Activated B cell treated with CpG ODN at 0.5 μM for 24 hours (primary cell): ENCODE measurements at regions of chr14 and their contacts with region 1.

Region 1: DNA sequence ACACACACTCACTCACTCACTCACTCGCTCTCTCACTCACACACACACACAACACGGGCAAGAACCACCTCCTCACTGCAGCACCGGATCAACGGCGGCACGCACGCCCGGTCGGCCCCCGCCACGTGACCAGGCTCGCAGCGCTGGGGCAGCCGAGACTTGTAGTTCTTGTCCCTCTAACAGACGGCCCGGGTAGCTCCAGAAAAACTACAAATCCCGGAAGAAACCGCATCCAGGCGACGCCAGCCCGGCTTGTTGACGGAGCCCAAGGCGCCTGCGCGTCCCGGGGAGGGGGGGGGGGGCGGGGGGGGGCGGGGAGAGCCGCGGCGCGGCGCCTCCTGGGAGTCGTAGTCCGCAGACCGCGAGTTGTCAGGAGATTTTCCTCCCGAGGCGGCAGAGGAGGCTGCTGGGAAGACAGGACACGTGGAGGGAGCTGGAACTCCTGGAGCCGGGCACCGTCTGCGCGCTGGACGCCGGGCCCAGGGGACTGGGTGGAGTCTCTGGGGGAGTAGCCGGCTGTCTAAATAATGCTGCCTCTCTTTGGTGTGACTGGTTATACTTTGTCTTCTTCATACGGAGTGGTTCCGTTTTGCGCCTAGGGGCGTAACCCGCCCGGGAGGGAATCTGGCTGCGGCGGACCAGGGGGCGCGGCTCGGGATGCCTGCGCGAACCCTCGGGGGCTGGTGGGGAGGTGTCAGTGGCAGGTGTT is at the start of gene MAX:
- DNase-seq: peak; percentile 92
- ATAC-seq: peak; percentile 86
- H3K4me3 Mint-ChIP-seq: peak within 1 kb of the TSS; percentile 89
- H3K27ac Mint-ChIP-seq: peak within 1 kb of the TSS; percentile 95
- H3K4me1 Mint-ChIP-seq: peaks cover 42% of the 10 kb centered on the region
- H3K27me3 Mint-ChIP-seq: no peaks in the 10 kb centered on the region
- CTCF ChIP-seq: no peak
- total RNA-seq, gene MAX: 115 and 116 TPM in 2 replicates

Region 2: DNA sequence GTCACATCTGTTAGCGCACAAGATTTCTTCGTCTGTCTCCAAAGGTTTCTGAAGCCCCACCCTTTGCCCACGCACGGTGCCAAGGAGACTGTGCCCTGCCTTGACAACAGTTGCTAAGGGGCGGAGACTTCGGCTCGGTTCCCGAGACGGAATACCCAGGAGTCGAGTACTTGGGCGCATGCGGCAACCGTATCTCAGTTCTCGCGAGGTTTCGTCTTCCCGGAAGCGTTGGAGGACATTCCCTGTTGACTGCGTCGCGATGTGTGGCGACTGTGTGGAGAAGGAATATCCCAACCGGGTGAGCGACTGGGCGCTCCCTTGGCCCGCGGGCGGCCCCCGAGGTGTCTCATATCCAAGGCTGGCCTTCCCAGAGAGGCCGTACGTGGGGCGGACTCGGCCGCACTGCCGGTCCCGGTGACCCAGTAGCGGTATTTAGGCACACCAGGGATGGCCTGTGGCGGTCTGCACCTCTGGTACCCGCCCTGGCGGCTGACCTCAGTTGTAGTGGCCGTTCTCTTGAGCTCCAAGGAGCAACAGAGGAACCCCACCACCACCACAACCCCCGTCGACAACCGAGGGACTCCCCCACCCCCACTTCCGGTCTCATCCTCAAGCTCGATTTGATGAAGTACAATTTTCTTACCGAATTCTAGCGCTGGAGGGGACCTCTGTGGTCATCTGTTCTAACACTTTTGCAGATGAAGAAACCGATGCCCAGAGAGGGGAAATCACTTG is 188.2 kb before region 1 on chr14 and contains the start of gene CHURC1:
- CTCF ChIA-PET with region 1: no interaction called
- POLR2A ChIA-PET with region 1: interaction called, 3 read pairs
- intact Hi-C with region 1: loop called (anchors 2 kb)
- DNase-seq: peak; percentile 89
- ATAC-seq: peak; percentile 98
- H3K4me3 Mint-ChIP-seq: peak within 1 kb of the TSS; percentile 92
- H3K27ac Mint-ChIP-seq: peak within 1 kb of the TSS; percentile 88
- H3K4me1 Mint-ChIP-seq: peaks cover 43% of the 10 kb centered on the region
- H3K27me3 Mint-ChIP-seq: peaks cover 3% of the 10 kb centered on the region
- CTCF ChIP-seq: no peak
- total RNA-seq, gene CHURC1: 69.6 and 83.8 TPM in 2 replicates

Region 3: GRCh38 chr14:65042731-65043372 is 59.7 kb before region 1 on chr14:
- CTCF ChIA-PET with region 1: no interaction called
- POLR2A ChIA-PET with region 1: interaction called, 12 read pairs
- intact Hi-C with region 1: no loop called
- DNase-seq: no peak
- ATAC-seq: peak; percentile 90
- H3K4me3 Mint-ChIP-seq: no peak overlapping the region
- H3K27ac Mint-ChIP-seq: peak overlapping the region; percentile 56
- H3K4me1 Mint-ChIP-seq: peaks cover 10% of the 10 kb centered on the region
- H3K27me3 Mint-ChIP-seq: no peaks in the 10 kb centered on the region
- CTCF ChIP-seq: no peak

Region 4: GRCh38 chr14:65074449-65075150 is 28.0 kb before region 1 on chr14:
- CTCF ChIA-PET with region 1: no interaction called
- POLR2A ChIA-PET with region 1: interaction called, 4 read pairs
- intact Hi-C with region 1: loop called (anchors 2 kb)
- DNase-seq: no peak
- ATAC-seq: peak; percentile 87
- H3K4me3 Mint-ChIP-seq: no peak overlapping the region
- H3K27ac Mint-ChIP-seq: peak overlapping the region; percentile 32
- H3K4me1 Mint-ChIP-seq: peaks cover 31% of the 10 kb centered on the region
- H3K27me3 Mint-ChIP-seq: no peaks in the 10 kb centered on the region
- CTCF ChIP-seq: no peak

Region 5: GRCh38 chr14:65137648-65138307 is 35.2 kb after region 1 on chr14:
- CTCF ChIA-PET with region 1: no interaction called
- POLR2A ChIA-PET with region 1: no interaction called
- intact Hi-C with region 1: loop called (anchors 1 kb)
- DNase-seq: no peak
- ATAC-seq: no peak
- H3K4me3 Mint-ChIP-seq: no peak overlapping the region
- H3K27ac Mint-ChIP-seq: no peak overlapping the region
- H3K4me1 Mint-ChIP-seq: no peaks in the 10 kb centered on the region
- H3K27me3 Mint-ChIP-seq: no peaks in the 10 kb centered on the region
- CTCF ChIP-seq: no peak